ENCODE measurements at regions of chr17 and their contacts with region 1.

Region 1: DNA sequence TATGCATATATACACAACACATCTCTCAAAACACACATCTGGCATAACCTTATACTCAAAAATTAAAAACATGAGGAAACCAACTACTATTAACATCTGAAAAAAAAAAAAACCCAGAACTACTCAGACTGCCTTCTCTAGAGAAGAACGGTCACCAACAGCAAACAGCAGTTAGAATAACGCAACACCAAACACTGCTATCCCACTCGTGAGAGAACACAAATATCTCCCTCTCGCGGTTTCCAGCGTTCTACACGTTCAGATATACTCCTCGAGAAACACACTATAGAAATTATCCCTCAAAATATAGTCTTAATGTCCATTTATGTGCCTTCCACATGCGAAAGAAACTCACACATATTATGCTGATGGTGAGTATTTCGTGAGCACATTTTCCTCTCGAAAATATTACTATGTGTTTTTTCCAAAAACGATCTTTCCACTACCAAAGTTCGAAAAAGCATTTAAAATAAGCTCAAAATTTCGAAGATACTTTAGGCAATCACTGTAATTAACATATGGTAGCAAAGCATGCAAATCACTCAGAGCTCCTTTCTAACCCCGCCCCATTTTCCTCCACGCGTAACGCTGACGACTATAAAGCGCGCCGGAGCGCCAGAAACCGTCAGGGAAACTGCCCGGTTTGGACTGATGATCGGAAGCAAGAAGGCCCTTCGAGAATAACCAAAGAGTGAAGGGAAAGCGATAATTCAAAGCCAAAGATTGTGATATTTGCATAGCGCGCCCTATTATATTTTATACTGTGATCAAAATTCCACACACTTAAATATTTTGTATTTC is 60.1 kb downstream of the TEX14 start:
- DNase-seq: peak; percentile 97
- ATAC-seq: peak; percentile 89
- H3K4me3 Mint-ChIP-seq: no peak overlapping the region
- H3K27ac Mint-ChIP-seq: no peak overlapping the region
- H3K4me1 Mint-ChIP-seq: peaks cover 10% of the 10 kb centered on the region
- H3K27me3 Mint-ChIP-seq: no peaks in the 10 kb centered on the region

Region 2: DNA sequence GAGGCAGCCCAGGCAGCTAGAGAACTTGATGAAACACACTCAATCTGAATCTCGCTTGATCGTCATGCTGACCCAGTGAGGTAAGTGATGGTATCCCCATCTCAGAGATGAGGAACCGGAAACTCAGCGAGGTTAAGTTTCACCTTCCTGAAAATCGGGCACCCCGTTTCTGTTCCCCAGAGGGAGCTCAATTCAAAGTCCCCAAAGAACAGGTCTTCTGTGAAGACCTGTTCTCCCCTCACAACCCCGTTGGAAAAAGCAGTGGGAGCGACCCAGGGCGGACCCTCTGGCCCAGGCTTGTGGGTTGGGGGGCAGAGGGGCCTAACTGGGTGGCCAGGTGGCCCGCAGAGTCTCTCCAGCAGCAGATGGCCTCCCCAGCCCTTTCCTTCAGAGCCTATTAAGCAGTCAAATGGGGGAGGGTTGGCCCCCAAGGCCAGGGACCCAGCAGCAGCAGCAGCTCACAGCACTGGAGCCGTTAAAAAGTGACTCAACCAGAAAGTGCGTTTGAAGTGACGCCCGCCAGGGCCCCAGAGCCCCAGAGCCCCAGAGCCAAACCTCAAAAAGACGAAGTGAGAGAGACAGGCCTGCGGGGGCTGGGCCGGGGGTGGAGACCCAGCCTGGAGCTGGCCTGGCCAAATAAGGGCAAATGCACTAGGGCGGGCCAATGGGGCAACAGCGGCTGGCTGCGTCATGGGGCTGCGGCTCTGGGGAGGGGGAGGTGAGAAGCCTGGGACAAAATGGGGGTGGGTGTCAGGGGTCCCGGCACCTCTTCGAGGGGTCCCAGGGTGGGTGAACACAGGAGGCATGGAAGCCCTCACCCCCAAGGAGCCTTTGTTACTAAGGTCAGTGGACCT is 293.9 kb before region 1 on chr17:
- CTCF ChIA-PET with region 1: no interaction called
- POLR2A ChIA-PET with region 1: interaction called, 12 read pairs
- DNase-seq: peak; percentile 96
- ATAC-seq: peak; percentile 67
- H3K4me3 Mint-ChIP-seq: peak overlapping the region; percentile 99
- H3K27ac Mint-ChIP-seq: peak overlapping the region; percentile 92
- H3K4me1 Mint-ChIP-seq: peaks cover 39% of the 10 kb centered on the region
- H3K27me3 Mint-ChIP-seq: no peaks in the 10 kb centered on the region

Region 3: DNA sequence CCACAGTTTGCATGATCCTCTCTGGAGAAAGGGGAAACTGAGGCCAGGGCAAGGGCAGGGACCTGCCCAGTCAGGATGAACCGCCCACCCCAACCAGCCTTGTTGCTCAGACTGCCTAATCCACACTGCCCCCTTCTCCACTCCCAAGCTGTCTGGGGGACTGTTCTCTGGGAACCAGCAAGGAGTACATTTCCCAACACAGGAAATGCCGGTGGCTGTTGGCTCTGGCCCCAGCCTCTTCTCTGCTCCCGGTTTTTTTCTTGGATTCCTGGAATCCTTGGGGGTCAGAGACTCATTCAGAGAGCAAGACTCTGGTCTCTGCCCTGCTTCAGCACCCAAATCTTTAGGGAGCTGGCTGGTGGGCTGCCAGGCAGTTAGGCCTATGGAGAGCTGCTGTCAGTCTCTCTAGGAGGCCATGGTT is 106.5 kb before region 1 on chr17:
- CTCF ChIA-PET with region 1: interaction called, 5 read pairs
- POLR2A ChIA-PET with region 1: interaction called, 46 read pairs
- DNase-seq: no peak
- ATAC-seq: no peak
- H3K4me3 Mint-ChIP-seq: no peak overlapping the region
- H3K27ac Mint-ChIP-seq: no peak overlapping the region
- H3K4me1 Mint-ChIP-seq: peaks cover 16% of the 10 kb centered on the region
- H3K27me3 Mint-ChIP-seq: peaks cover 16% of the 10 kb centered on the region

Region 4: DNA sequence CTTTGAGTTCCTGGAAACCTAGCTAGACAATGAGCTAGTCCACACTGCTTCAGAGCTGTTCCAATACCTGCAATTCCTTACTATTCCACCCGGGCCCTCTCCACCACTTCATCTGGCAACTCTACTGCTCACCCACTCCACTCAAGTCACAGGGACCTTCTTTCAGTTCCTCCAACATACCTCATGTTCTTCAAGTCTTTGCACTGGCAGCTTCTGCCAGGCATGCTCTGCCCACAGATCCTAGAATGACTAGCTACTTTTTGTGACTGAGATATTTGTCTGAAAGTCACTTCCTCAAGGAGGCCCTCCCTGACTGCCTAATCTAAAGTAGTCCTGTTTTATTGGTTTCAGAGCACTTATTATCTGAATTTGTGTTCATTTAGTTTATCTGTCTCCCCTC is 26.3 kb before region 1 on chr17:
- CTCF ChIA-PET with region 1: no interaction called
- POLR2A ChIA-PET with region 1: interaction called, 165 read pairs
- DNase-seq: no peak
- ATAC-seq: no peak
- H3K4me3 Mint-ChIP-seq: no peak overlapping the region
- H3K27ac Mint-ChIP-seq: no peak overlapping the region
- H3K4me1 Mint-ChIP-seq: no peaks in the 10 kb centered on the region
- H3K27me3 Mint-ChIP-seq: no peaks in the 10 kb centered on the region

Region 5: DNA sequence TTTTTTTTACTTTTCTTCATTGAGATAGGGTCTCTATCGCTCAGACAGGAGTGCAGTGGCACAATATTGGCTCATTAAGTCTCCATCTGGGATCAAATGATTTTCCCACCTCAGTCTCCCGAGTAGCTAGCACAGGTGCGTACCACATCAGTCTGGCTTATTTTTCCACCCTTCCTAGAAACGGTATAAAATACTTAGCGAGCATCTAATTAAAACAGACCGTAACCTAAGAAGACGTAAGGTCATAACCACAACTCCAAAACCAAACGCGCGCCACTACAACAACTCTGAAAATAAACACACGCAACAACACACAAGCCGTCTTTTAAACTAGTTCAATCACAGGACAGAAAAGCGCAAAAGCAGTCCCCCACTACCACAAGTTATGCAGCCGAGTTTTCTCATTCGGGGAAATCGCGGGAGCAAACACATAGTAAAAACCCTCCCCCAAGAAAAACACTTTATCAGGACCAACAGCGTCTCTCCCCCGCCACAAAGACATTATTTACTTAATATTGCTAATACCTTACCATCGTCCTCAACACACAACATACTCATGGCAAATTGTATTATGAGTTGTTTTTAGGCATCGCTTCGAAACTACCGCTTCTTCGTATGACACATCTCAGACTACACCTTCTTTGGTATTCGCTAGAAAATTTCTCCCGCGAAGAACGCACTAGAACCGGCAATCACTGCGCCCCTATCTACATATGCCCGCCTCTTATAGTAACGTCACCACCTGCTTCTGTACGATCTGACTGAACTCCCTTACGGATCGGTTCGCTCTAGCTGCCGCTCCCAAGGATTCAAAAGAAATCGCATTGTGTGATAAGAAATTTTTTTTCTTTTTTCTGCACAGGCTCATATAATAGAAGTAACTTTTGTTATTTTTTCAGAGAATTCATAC is 27.3 kb after region 1 on chr17:
- CTCF ChIA-PET with region 1: interaction called, 4 read pairs
- POLR2A ChIA-PET with region 1: interaction called, 272 read pairs
- DNase-seq: peak; percentile 83
- ATAC-seq: peak; percentile 82
- H3K4me3 Mint-ChIP-seq: peak overlapping the region; percentile 65
- H3K27ac Mint-ChIP-seq: peak overlapping the region; percentile 90
- H3K4me1 Mint-ChIP-seq: peaks cover 19% of the 10 kb centered on the region
- H3K27me3 Mint-ChIP-seq: peaks cover 9% of the 10 kb centered on the region

Region 6: DNA sequence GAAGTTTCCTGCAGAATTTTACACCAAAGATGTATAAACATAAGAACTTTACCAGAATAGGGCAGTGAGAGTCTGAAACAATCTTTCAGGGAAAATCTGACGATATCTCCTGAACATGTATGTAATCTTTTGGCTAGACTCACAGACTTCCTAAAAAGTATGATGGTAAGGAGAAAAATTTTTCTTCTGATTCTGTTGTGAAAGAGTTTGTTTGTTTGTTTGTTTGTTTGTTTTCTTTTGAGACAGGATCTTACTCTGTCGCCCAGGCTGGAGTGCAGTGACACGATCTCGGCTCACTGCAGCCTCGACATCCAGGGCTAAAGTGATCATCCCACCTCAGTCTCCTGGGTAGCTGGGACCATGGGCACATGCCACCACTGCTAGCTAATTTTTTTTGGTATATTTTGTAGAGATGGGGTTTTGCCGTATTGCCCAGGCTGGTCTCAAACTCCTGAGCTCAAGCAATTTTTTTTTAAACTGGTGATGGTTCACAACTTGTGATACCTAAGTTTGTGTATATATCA is 248.7 kb after region 1 on chr17:
- CTCF ChIA-PET with region 1: no interaction called
- POLR2A ChIA-PET with region 1: no interaction called
- DNase-seq: no peak
- ATAC-seq: no peak
- H3K4me3 Mint-ChIP-seq: no peak overlapping the region
- H3K27ac Mint-ChIP-seq: no peak overlapping the region
- H3K4me1 Mint-ChIP-seq: no peaks in the 10 kb centered on the region
- H3K27me3 Mint-ChIP-seq: peaks cover 5% of the 10 kb centered on the region

Region 7: DNA sequence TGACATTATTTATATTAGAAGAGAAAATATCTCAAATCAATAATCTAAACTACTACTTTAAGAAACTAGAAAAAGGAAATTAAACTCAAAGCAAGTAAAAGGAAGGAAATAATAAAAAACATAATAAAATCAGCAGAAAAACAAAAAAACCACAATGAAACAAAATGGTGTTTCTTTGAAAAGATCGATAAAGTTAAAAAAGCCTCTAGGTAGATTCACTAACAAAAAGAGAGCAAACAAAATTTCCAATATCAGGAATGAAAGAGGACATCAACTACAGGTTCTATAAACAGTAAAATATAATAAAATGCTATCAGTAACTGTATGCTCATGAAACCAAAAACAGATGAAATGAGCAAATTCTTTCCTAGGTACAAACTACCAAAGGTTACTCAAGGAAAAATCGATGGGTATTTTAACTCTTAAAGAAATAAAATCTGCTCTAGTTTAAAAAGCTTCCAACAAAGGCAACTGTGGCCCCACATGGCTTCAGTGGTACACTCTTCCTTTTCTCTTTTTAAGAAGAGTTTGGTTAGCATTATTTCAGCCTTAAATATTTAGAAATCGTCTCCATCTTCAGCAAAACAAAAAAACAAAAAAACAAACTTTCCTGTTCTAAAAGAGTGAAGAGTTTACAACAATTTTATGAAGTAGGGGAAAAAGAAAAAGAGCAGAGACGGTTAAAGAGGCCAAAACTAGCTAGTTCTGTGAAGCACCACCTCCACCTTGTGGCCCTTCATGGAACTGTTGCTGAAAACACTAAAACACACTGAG is 372.8 kb after region 1 on chr17:
- CTCF ChIA-PET with region 1: interaction called, 3 read pairs
- POLR2A ChIA-PET with region 1: interaction called, 30 read pairs
- DNase-seq: peak; percentile 78
- ATAC-seq: peak; percentile 47
- H3K4me3 Mint-ChIP-seq: no peak overlapping the region
- H3K27ac Mint-ChIP-seq: peak overlapping the region; percentile 58
- H3K4me1 Mint-ChIP-seq: peaks cover 28% of the 10 kb centered on the region
- H3K27me3 Mint-ChIP-seq: no peaks in the 10 kb centered on the region

Region 8: DNA sequence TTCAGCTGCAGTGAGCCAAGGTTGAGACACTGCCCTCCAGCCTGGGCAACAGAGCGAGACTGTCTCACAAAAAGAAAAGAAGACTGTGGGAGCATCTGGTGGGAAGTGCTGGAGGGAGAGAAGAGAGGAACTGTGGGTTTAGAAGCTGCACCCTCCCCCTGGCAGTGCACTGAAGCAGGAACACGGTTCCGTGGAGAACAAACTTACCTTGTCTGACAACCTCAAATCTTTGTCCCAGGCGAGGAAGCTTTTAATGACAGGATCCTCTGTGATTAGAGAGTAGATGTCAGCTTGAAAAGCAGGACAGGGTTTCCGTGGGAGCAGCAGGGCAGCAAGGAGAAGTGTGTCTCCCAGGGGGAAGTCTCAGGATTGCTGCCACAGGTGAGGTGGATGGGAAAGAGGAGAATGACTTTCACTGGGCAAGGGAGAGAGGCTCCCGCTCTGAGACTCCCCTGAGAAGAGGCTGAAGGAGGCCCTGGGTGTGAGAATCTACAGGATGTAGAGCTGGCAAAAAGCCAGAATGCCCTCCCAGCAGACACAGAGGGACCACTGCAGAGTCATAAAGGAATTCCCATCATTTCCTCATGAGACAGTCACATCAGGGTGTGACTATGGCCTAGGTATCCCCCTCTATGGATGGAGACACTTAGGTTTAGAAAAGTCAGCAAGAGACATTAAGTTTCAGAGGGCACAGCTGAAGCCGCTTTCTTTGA is 546.7 kb after region 1 on chr17:
- CTCF ChIA-PET with region 1: no interaction called
- POLR2A ChIA-PET with region 1: no interaction called
- DNase-seq: no peak
- ATAC-seq: no peak
- H3K4me3 Mint-ChIP-seq: no peak overlapping the region
- H3K27ac Mint-ChIP-seq: no peak overlapping the region
- H3K4me1 Mint-ChIP-seq: no peaks in the 10 kb centered on the region
- H3K27me3 Mint-ChIP-seq: no peaks in the 10 kb centered on the region